ENCODE measurements at regions of chr6 and their contacts with region 1.

Region 1: GRCh38 chr6:39724787-39725631 is at the start of gene KIF6:
- DNase-seq: peak; percentile 58 to 71 (median 66)
- H3K4me3 ChIP-seq: peak within 1 kb of the TSS; percentile 37 to 39
- H3K4me3 Mint-ChIP-seq: peak within 1 kb of the TSS; percentile 89 to 95 (median 92)
- H3K27ac ChIP-seq: no peak within 1 kb of the TSS
- H3K27ac Mint-ChIP-seq: peak within 1 kb of the TSS in 4 of 7 donors; percentile 63 to 83 (median 75)
- H3K4me1 ChIP-seq: no peaks in the 10 kb centered on the region
- H3K4me1 Mint-ChIP-seq: peaks cover 0 to 7% (median 4%) of the 10 kb centered on the region in 4 donors
- H3K27me3 ChIP-seq: no peaks in the 10 kb centered on the region
- H3K27me3 Mint-ChIP-seq: peaks cover 1 to 4% of the 10 kb centered on the region in 2 donors
- total RNA-seq, gene KIF6: not detected

Region 2: DNA sequence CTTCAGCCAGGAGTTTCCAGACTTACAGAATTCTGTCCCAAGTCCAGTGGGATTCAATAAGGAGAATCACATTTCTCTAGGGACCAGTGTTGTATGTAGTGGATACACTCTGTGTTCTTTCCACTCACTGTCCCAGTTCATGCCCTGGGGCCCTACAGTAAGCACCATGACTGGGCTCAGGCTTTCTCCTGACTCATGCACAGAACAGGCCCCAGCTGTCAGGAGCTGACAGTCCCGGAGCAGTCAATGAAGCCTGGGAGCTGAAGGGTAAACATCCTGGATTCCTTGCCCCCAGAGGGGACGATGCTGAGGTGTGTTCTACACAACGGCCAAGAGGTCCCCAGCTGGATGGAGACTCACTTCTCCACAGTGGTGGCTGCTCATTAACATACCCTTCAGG is 902.3 kb after region 1 on chr6:
- CTCF ChIA-PET with region 1: no interaction called
- POLR2A ChIA-PET with region 1: no interaction called
- intact Hi-C with region 1: loop called (anchors 5 kb)
- DNase-seq: no peak
- H3K4me3 ChIP-seq: no peak overlapping the region
- H3K4me3 Mint-ChIP-seq: no peak overlapping the region
- H3K27ac ChIP-seq: no peak overlapping the region
- H3K27ac Mint-ChIP-seq: no peak overlapping the region
- H3K4me1 ChIP-seq: no peaks in the 10 kb centered on the region
- H3K4me1 Mint-ChIP-seq: no peaks in the 10 kb centered on the region
- H3K27me3 ChIP-seq: no peaks in the 10 kb centered on the region
- H3K27me3 Mint-ChIP-seq: peaks cover 0 to 4% of the 10 kb centered on the region in 2 donors